Ascending aorta (tissue), 2 donors: ENCODE measurements at regions of chr1 and their contacts with region 1.

Region 1: GRCh38 chr1:65067491-65068201 is 80.4 kb upstream of the AK4 start:
- DNase-seq: peak; percentile 13 to 83
- H3K4me3 ChIP-seq: peak overlapping the region; percentile 69 to 96
- H3K27ac ChIP-seq: peak overlapping the region; percentile 92 to 95
- H3K4me1 ChIP-seq: peaks cover 0 to 8% of the 10 kb centered on the region in 2 donors
- H3K27me3 ChIP-seq: no peaks in the 10 kb centered on the region
- CTCF ChIP-seq: no peak

Region 2: DNA sequence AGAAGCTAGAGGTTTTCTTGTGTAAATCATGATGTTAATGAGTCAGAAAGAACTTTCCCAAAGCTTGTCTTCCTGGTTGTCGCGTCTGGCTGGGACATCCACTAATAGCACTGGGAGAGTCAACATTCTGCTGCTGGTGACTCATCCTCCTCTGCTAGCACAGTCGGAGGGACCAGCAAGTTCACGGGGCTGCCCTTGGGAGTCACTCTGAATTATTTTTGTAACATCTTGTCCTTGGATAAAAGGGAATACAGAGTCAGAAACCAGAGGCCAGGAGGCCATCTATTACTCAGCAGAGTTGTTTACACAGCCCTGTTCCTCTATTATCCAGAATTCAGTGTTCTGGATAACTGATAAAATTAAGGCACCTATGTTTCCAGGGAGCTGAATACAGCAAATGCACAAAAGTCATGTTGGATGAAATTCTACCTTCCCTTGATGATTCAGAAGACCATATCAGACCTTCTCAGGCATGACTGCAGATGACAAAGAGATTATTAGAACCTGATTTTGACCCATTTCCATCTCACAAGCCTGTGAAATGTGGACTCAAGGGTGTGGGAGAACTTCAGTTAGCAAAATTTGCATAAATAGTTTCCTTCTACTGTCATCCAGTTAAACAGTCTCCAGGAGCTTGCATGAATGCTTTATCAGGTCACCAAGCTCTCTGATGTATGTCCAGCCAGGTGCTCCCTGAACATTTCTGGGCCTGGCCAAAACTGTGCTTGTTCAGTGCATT is 169.4 kb before region 1 on chr1:
- intact Hi-C with region 1: loop called (anchors 5 kb)
- DNase-seq: peak; percentile 92 to 96
- H3K4me3 ChIP-seq: peak overlapping the region; percentile 24 to 31
- H3K27ac ChIP-seq: peak overlapping the region; percentile 79 to 86
- H3K4me1 ChIP-seq: peaks cover 4 to 23% of the 10 kb centered on the region in 2 donors
- H3K27me3 ChIP-seq: no peaks in the 10 kb centered on the region
- CTCF ChIP-seq: no peak

Region 3: DNA sequence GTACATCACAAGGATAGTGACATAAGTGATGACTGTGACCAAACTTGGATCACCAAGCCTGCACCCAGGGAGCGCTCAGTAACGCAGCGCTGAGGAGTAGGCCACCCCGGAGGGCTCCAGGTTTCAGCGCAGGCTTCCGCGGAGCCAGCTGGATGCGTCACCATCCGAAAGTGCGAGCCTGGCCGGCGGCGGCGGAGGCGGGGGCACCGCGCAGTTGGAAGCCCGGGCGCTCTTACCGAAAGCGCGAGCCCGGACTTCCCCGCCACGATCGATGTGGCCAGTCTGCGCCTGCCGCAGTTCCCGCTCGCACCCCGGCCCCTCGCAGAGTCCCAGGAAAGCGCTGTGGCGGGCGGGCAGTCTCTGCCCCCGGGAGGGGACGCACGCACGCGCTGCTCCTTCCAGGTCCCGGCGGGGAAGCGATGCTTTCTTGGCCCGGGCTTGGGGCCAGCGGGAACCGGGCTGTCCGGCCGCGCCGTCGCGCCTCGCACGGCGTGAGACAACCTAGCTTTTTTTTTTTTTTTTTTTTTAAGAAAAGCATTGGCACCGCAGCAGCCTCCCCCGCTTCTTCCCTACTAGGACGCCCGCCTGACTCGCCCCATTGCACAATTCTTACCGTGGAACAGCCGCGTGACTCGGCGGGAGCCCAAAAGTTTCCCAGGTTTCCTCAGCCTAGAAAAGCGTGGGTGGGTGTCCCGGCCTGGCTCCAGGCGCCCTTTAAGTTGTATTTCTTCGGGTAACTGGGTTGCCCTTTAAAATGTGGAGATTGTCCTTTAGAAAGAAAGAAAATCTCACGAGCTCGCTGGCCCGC is 64.9 kb before region 1 on chr1:
- intact Hi-C with region 1: loop called (anchors 2 kb)
- DNase-seq: peak; percentile 62 to 96
- H3K4me3 ChIP-seq: peak overlapping the region; percentile 67 to 80
- H3K27ac ChIP-seq: peak overlapping the region; percentile 98 to 99
- H3K4me1 ChIP-seq: peaks cover 4 to 9% of the 10 kb centered on the region in 2 donors
- H3K27me3 ChIP-seq: no peaks in the 10 kb centered on the region
- CTCF ChIP-seq: no peak

Region 4: GRCh38 chr1:65195495-65196417 is 128.1 kb after region 1 on chr1:
- intact Hi-C with region 1: loop called (anchors 2 kb)
- DNase-seq: no peak
- H3K4me3 ChIP-seq: no peak overlapping the region
- H3K27ac ChIP-seq: peak overlapping the region; percentile 72 to 84
- H3K4me1 ChIP-seq: peaks cover 7 to 15% of the 10 kb centered on the region in 2 donors
- H3K27me3 ChIP-seq: no peaks in the 10 kb centered on the region
- CTCF ChIP-seq: no peak

Region 5: DNA sequence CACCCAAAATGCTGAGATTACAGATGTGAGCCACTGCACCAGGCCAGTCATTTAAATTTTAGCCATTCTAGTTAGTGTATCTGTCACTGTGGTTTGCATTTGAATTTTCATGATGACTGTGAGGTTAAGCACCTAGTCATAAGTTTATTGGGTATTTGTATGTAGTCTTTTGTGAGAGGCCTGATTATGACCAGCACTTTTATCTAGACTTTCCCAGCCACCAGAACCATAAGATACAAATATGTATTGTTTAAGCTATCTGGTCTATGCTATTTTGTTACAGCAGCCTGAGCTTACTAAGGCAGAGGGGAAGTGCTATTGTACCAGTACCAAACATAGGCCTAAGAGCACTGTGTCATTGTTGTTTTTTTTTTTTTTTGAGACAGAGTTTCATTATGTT is 221.8 kb after region 1 on chr1:
- intact Hi-C with region 1: no loop called
- DNase-seq: no peak
- H3K4me3 ChIP-seq: no peak overlapping the region
- H3K27ac ChIP-seq: no peak overlapping the region
- H3K4me1 ChIP-seq: no peaks in the 10 kb centered on the region
- H3K27me3 ChIP-seq: no peaks in the 10 kb centered on the region
- CTCF ChIP-seq: no peak

Region 6: GRCh38 chr1:65419681-65420589 is 352.3 kb after region 1 on chr1:
- intact Hi-C with region 1: loop called (anchors 2 kb)
- DNase-seq: peak; percentile 93 to 99
- H3K4me3 ChIP-seq: peak overlapping the region; percentile 85 to 93
- H3K27ac ChIP-seq: peak overlapping the region; percentile 96 to 99
- H3K4me1 ChIP-seq: peaks cover 4 to 19% of the 10 kb centered on the region in 2 donors
- H3K27me3 ChIP-seq: no peaks in the 10 kb centered on the region
- CTCF ChIP-seq: no peak